ENCODE measurements at regions of chr2 and their contacts with region 1.

Region 1: DNA sequence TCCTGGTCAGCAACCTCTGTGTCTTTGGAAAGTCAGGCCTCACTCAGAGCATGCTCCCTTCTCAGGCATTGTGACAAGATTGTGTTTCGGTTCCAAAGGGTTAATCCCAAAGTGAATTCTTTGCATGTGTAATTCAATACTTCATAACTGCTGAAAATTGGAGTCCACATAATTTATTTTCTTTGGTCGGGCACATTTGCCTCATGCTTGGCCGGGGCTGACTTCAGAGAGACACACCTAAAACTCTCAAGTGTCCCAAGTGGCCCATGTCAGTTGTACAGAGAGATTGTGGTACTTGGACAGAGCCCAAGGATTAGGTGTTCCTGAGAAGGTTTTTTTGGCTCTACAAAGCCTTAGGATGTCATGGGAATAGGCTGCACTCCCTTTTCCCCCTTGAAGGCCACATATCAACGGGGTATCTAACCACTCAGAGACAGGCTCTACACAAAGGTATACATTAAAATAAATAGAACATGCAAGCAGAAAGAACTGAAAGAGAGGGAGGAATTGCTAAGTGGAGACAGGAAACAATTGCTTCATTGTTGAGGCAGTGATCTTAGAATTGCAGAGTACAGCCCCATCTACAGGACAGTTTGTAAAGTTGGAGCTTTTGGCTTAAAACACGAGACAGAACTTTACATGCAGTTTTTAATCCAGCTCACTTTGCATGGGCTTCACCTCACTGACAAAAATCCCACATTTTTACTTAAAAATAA is 1232.3 kb upstream of the ZEB2 start:
- DNase-seq: peak; percentile 79
- H3K4me3 ChIP-seq: peak overlapping the region; percentile 3
- H3K27ac ChIP-seq: peak overlapping the region; percentile 8
- H3K4me1 ChIP-seq: peaks cover 34% of the 10 kb centered on the region
- CTCF ChIP-seq: peak; percentile 90

Region 2: DNA sequence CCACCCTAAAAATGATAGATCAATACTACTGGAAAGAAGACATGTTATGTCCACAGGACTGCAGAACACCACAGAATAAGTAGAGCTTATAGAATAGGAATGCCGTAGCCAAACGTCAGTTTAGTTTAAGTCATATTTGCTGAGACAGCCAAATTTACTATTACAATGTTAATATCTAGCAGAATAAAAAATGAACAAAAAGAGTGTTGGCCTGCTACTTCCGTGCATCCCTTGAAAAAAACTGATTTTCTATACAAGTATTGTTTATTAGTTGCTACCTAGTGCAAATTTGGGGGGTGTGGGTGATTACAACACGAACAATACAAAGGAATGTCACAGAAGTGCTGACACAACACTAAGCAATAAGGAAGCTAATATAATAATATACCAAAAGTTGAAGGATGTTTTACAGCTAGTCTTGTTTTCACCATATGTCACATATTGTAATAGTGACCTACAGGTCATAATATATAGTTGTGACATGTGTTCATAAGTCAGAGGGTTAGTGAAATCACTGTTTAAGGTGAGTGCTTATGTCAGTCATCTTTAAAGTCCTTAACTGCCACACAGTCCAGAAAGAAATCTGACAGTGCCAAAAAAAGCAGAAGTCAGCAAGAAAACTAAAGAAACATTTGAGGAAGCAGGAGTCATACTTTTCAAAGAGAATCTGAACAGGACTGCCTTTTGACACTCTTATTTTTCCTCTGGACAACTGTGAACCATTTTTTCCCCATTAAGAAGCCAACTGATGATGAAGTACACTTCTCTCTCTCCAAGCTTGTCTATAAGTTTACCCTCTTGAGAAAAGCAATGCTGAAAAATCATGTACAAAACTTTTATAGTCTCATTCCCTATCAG is 1608.7 kb before region 1 on chr2:
- CTCF ChIA-PET with region 1: no interaction called
- POLR2A ChIA-PET with region 1: interaction called, 6 read pairs
- intact Hi-C with region 1: loop called (anchors 10 kb)
- DNase-seq: peak; percentile 7
- H3K4me3 ChIP-seq: no peak overlapping the region
- H3K27ac ChIP-seq: no peak overlapping the region
- H3K4me1 ChIP-seq: peaks cover 3% of the 10 kb centered on the region
- CTCF ChIP-seq: no peak

Region 3: GRCh38 chr2:144516981-144517865 is 1235.0 kb before region 1 on chr2:
- CTCF ChIA-PET with region 1: no interaction called
- POLR2A ChIA-PET with region 1: interaction called, 3 read pairs
- intact Hi-C with region 1: loop called (anchors 10 kb)
- DNase-seq: peak; percentile 64
- H3K4me3 ChIP-seq: peak overlapping the region; percentile 83
- H3K27ac ChIP-seq: no peak overlapping the region
- H3K4me1 ChIP-seq: peaks cover 36% of the 10 kb centered on the region
- CTCF ChIP-seq: no peak

Region 4: DNA sequence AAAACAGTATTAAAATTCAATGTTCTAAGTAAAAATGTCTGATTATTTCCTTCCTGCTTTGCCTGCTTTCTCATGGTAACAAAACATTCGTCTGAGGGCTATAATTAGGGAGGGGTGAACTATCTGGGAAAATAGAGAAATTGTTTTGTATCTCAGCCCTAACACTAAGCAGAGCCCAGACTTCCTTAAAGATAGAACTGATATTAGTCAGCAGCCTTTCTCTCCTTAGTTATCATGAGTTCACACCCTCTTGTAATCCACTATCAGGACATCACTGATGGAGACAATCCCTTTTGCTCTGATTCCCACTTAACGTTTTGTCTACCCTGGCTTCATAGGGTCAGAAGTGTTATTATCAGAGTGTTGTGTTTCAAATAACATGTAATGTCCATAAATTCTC is 531.2 kb before region 1 on chr2:
- CTCF ChIA-PET with region 1: no interaction called
- POLR2A ChIA-PET with region 1: no interaction called
- intact Hi-C with region 1: loop called (anchors 5 kb)
- DNase-seq: peak; percentile 13
- H3K4me3 ChIP-seq: no peak overlapping the region
- H3K27ac ChIP-seq: peak overlapping the region; percentile 80
- H3K4me1 ChIP-seq: peaks cover 36% of the 10 kb centered on the region
- CTCF ChIP-seq: no peak

Region 5: DNA sequence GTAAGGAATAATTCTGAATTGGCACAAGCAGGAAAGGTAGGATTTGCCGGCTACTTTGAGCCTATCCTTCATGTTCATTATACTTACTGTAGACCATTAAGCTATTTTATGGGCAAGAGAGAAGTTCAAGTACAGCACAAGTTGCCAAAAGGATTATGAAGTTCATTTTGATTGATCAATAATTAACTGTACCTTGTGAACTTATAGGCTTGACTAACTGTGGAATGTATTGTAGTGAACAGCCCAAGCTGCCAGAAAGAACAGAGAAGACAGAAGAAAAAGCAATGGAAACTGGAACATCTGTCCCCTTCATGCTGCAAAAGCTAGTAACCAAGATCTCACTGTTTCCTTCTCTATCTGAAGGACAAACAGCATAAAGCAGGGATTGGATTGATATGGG is 422.3 kb before region 1 on chr2:
- CTCF ChIA-PET with region 1: no interaction called
- POLR2A ChIA-PET with region 1: no interaction called
- intact Hi-C with region 1: no loop called
- DNase-seq: no peak
- H3K4me3 ChIP-seq: no peak overlapping the region
- H3K27ac ChIP-seq: no peak overlapping the region
- H3K4me1 ChIP-seq: peaks cover 6% of the 10 kb centered on the region
- CTCF ChIP-seq: no peak

Measured in OCI-LY7 (cell line).